GM10248 (cell line): ENCODE measurements at regions of chr9 and their contacts with region 1.

Region 1: GRCh38 chr9:77896938-77897667 is 134.5 kb downstream of the GNAQ start:
- DNase-seq: no peak
- CTCF ChIP-seq: no peak

Region 2: GRCh38 chr9:77856615-77857014 is 40.5 kb before region 1 on chr9:
- CTCF ChIA-PET with region 1: no interaction called
- POLR2A ChIA-PET with region 1: no interaction called
- DNase-seq: no peak
- CTCF ChIP-seq: no peak

Region 3: GRCh38 chr9:77884395-77884851 is 12.7 kb before region 1 on chr9:
- CTCF ChIA-PET with region 1: interaction called, 12 read pairs
- POLR2A ChIA-PET with region 1: no interaction called
- DNase-seq: no peak
- CTCF ChIP-seq: no peak